HCT116 (cell line): ENCODE measurements at regions of chr1 and their contacts with region 1.

Region 1: DNA sequence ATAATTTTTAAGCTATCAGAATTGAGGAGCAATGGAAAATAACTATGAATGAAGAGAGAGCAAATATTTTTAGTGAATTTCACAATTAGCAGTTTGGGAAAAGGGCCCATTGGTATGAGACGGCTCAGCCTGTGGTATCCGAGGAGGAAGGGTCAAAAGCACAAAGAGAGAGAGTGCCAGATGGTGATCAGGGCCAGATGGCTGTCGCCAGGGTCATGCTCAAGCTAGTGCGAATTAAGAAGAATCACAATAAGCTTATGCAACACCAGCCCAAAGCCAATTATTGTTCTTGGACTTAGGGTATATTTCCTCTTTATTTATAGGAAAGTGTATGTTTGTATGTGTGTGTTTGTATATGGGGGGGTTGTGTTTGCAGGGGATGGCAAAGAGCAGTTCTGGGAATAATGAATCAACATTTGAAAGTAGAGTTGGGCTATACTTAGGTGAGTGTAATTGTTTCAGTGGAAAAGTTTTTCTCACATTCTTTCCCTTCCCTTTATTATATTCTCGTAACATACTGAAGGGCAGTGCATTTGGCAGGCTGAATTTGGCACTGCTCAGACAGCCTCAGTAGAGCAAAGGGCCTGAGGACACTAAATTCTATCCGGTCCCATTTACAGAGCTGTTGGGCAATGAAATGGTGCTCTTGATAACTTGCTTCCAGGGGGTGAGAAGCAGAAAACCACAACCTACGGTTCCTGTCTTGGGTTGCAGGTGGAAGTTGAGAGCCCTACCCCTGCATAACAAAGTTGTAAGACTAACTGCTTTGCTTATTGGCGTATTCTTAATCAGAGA is 19.5 kb upstream of the DDR2 start:
- DNase-seq: no peak
- ATAC-seq: 0 out of 2 replicates have a peak, but pooled peaks have one; percentile 9
- H3K4me3 ChIP-seq: no peak overlapping the region
- H3K27ac ChIP-seq: no peak overlapping the region
- H3K4me1 ChIP-seq: no peaks in the 10 kb centered on the region
- H3K27me3 ChIP-seq: no peaks in the 10 kb centered on the region
- CTCF ChIP-seq: no peak
- POLR2A ChIP-seq: no peak
- RAD21 ChIP-seq: no peak

Region 2: GRCh38 chr1:162561037-162561616 is 51.7 kb before region 1 on chr1:
- CTCF ChIA-PET with region 1: no interaction called
- POLR2A ChIA-PET with region 1: no interaction called
- RAD21 ChIA-PET with region 1: no interaction called
- intact Hi-C with region 1: no loop called
- DNase-seq: peak; percentile 85
- ATAC-seq: peak; percentile 93
- H3K4me3 ChIP-seq: peak overlapping the region; percentile 80 to 96
- H3K27ac ChIP-seq: peak overlapping the region; percentile 64
- H3K4me1 ChIP-seq: peaks cover 0 to 21% of the 10 kb centered on the region in 2 experiments; a peak in 3 of 4 replicates
- H3K27me3 ChIP-seq: no peaks in the 10 kb centered on the region
- CTCF ChIP-seq: no peak
- POLR2A ChIP-seq: no peak
- RAD21 ChIP-seq: no peak

Region 3: GRCh38 chr1:162627662-162628296 is 15.0 kb after region 1 on chr1:
- CTCF ChIA-PET with region 1: interaction called, 18 read pairs
- POLR2A ChIA-PET with region 1: interaction called, 3 read pairs
- RAD21 ChIA-PET with region 1: no interaction called
- intact Hi-C with region 1: no loop called
- DNase-seq: peak; percentile 44
- ATAC-seq: peak; percentile 93
- H3K4me3 ChIP-seq: no peak overlapping the region
- H3K27ac ChIP-seq: no peak overlapping the region
- H3K4me1 ChIP-seq: peaks cover 0 to 6% of the 10 kb centered on the region in 2 experiments; a peak in 1 of 4 replicates
- H3K27me3 ChIP-seq: no peaks in the 10 kb centered on the region
- CTCF ChIP-seq: peak; percentile 55 to 83 (median 65); a peak in 5 of 6 replicates
- POLR2A ChIP-seq: no peak
- RAD21 ChIP-seq: peak; percentile 69

Region 4: DNA sequence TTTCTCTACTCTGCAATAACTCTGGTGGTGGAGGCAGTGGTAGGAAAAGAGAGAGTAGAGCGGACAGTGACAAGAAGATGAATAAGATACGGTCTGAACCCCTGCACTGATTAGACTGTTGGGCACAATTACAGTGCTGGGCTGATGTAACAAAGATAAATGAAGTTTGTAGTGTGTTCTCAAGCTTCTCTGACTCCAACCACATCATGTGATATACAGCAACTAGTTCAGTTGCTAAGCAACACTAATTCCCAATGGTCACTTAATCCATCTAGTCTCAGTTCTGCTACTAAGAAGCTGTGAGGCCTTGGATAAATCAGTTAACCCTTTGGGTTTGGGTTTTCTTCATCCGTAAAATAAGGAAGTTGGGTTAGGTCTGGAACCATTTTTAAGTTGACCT is 36.8 kb after region 1 on chr1:
- CTCF ChIA-PET with region 1: no interaction called
- POLR2A ChIA-PET with region 1: no interaction called
- RAD21 ChIA-PET with region 1: no interaction called
- intact Hi-C with region 1: no loop called
- DNase-seq: no peak
- ATAC-seq: no peak
- H3K4me3 ChIP-seq: no peak overlapping the region
- H3K27ac ChIP-seq: no peak overlapping the region
- H3K4me1 ChIP-seq: no peaks in the 10 kb centered on the region
- H3K27me3 ChIP-seq: no peaks in the 10 kb centered on the region
- CTCF ChIP-seq: no peak
- POLR2A ChIP-seq: no peak
- RAD21 ChIP-seq: no peak